ENCODE measurements at regions of chr7 and their contacts with region 1.

Region 1: DNA sequence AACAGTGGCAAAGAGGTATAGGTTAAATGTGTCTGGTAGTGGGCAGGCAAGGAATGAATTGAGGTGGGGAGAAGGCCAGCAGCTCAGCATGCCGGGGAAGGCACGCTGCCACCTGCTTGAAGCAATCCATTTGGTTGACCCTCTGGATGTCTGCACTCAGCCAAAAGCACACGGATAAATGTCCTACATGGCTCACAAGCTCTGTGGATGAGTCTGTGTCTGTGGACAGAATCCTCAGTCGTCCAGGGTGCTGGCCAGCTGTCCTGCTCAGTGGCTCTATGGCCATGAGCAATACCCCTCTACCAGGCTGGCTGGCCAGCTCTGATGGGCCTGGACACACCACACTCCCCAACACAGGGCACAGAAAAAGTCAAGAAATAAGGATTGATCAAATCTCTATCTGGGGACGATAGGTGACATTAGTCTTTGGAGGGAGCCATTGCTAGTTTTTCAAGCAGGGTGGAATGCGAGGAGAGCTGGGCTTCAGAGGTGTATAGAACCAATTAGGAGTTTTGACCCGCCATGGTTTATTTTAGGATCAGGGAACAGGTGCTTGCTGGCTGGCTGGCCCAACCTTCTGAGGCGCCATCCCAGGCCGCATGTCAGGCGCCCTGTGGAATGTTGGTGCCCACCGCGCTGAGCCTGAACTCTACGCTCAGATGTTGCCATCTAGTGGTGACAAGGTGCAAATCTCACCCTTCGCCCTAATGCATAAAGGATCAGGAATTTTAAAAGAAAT is 493.4 kb downstream of the TNS3 start:
- DNase-seq: peak; percentile 45
- H3K4me3 ChIP-seq: no peak overlapping the region
- H3K27ac ChIP-seq: no peak overlapping the region
- H3K4me1 ChIP-seq: no peaks in the 10 kb centered on the region
- CTCF ChIP-seq: peak; percentile 95

Region 2: DNA sequence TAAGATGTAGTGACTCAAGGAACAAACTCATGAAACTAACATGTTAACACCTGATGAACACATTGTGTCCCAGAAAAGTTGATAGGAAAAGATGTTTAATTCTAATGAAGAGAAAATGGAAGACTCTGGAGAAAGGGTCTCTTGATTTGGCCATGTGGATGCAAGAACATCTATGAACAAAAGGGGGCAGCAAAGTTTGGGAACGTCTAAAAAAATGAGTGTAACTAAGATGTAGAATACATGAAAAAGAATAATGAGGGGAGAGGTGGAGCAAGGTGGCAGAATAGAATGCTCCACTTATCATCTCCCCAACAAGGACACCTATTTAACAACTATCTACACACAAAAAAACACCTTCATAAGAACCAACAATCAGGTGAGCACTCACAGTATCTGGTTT is 311.7 kb before region 1 on chr7:
- CTCF ChIA-PET with region 1: no interaction called
- POLR2A ChIA-PET with region 1: no interaction called
- intact Hi-C with region 1: loop called (anchors 2 kb)
- DNase-seq: peak; percentile 53
- H3K4me3 ChIP-seq: no peak overlapping the region
- H3K27ac ChIP-seq: no peak overlapping the region
- H3K4me1 ChIP-seq: no peaks in the 10 kb centered on the region
- CTCF ChIP-seq: peak; percentile 80

Region 3: DNA sequence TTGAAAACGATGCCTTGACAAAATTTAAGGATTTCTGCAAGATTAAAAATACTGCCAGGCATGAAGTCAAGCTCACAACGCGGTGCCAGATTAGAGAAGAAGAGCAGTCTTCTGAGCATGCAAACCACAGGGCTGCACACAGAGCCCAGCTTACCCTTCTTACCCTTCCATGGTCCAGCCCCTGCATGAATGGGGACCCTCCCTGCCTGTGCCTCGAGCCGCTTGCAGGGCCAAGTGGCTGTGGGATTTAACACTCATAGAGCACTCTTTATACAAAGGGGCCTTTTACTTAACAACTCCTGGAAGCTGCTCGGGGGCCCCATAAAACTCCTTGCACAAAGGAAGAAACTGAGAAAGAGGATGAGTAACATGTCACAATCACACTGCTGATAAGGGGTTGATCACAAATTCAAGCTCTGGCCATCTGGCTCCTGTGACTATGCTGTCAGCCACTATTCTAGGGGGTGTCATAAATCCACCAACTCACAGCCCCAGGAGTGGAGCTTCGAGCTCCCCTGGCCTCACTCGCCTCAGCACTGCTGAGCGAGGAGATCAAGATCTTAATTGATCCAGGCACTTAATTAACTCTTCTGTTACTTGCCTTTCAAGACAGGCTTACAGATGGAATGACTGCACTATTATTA is 21.4 kb before region 1 on chr7:
- CTCF ChIA-PET with region 1: no interaction called
- POLR2A ChIA-PET with region 1: no interaction called
- intact Hi-C with region 1: no loop called
- DNase-seq: no peak
- H3K4me3 ChIP-seq: no peak overlapping the region
- H3K27ac ChIP-seq: no peak overlapping the region
- H3K4me1 ChIP-seq: no peaks in the 10 kb centered on the region
- CTCF ChIP-seq: no peak

Region 4: DNA sequence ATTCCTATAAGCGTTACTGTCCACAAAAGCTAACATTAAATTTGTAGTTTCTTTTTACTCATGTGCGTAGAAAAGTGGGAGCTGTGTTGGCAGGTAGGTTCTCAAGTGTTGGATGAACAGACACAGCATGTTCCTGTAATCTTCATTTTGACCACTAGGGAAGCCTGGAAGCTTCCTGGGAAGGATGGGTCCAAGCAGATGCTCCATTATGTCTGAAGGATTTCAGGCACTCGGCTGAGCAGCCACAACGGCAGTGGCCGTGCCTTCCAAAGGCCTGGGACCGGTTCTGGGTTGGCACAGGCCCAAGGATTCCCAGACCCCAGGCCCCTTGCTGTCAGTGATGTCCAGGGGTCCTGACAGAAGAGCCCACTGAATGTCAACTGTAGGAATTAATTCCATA is 107.1 kb after region 1 on chr7:
- CTCF ChIA-PET with region 1: no interaction called
- POLR2A ChIA-PET with region 1: no interaction called
- intact Hi-C with region 1: no loop called
- DNase-seq: no peak
- H3K4me3 ChIP-seq: no peak overlapping the region
- H3K27ac ChIP-seq: no peak overlapping the region
- H3K4me1 ChIP-seq: peaks cover 17% of the 10 kb centered on the region
- CTCF ChIP-seq: peak; percentile 58

Measured in OCI-LY7 (cell line).